Calu3 (cell line): ENCODE measurements at regions of chr3 and their contacts with region 1.

Region 1: GRCh38 chr3:156151824-156152428 is 31.5 kb downstream of the KCNAB1 start:
- DNase-seq: peak; percentile 84
- H3K4me3 Mint-ChIP-seq: no peak overlapping the region
- H3K27ac Mint-ChIP-seq: no peak overlapping the region
- H3K4me1 Mint-ChIP-seq: peaks cover 8% of the 10 kb centered on the region
- H3K27me3 Mint-ChIP-seq: peaks cover 55% of the 10 kb centered on the region
- CTCF ChIP-seq: peak; percentile 95

Region 2: GRCh38 chr3:156307704-156308103 is 155.8 kb after region 1 on chr3:
- CTCF ChIA-PET with region 1: no interaction called
- intact Hi-C with region 1: loop called (anchors 5 kb)
- DNase-seq: peak; percentile 78
- H3K4me3 Mint-ChIP-seq: no peak overlapping the region
- H3K27ac Mint-ChIP-seq: no peak overlapping the region
- H3K4me1 Mint-ChIP-seq: peaks cover 38% of the 10 kb centered on the region
- H3K27me3 Mint-ChIP-seq: peaks cover 15% of the 10 kb centered on the region
- CTCF ChIP-seq: no peak

Region 3: GRCh38 chr3:156449712-156450574 is 298.0 kb after region 1 on chr3:
- CTCF ChIA-PET with region 1: interaction called, 14 read pairs
- intact Hi-C with region 1: loop called (anchors 2 kb)
- DNase-seq: peak; percentile 39
- H3K4me3 Mint-ChIP-seq: no peak overlapping the region
- H3K27ac Mint-ChIP-seq: no peak overlapping the region
- H3K4me1 Mint-ChIP-seq: no peaks in the 10 kb centered on the region
- H3K27me3 Mint-ChIP-seq: no peaks in the 10 kb centered on the region
- CTCF ChIP-seq: peak; percentile 61

Region 4: DNA sequence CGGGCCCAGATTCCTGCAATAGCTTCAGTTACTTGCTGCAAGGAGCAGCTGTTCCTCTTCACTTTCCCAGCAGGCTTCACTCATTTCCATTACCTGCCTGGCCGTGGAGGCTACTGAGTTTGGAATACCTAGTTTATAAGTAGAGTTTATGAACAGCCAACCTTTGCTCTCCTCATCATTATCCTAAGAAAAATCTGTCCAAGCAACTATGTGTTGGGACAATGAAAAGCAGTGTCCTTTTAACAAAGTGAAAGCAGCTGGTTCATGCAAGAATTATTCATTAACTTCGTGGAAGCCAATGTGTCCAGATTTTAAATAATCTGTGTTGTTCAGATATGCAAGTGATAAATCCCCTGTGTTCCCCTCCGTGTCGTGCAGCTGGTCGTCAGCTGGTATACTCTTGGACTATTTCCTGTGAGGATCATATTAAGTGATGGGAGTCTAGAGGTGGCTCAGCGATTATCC is 442.3 kb after region 1 on chr3:
- CTCF ChIA-PET with region 1: no interaction called
- intact Hi-C with region 1: no loop called
- DNase-seq: peak; percentile 35
- H3K4me3 Mint-ChIP-seq: peak overlapping the region; percentile 63
- H3K27ac Mint-ChIP-seq: peak overlapping the region; percentile 7
- H3K4me1 Mint-ChIP-seq: peaks cover 20% of the 10 kb centered on the region
- H3K27me3 Mint-ChIP-seq: no peaks in the 10 kb centered on the region
- CTCF ChIP-seq: no peak

Region 5: DNA sequence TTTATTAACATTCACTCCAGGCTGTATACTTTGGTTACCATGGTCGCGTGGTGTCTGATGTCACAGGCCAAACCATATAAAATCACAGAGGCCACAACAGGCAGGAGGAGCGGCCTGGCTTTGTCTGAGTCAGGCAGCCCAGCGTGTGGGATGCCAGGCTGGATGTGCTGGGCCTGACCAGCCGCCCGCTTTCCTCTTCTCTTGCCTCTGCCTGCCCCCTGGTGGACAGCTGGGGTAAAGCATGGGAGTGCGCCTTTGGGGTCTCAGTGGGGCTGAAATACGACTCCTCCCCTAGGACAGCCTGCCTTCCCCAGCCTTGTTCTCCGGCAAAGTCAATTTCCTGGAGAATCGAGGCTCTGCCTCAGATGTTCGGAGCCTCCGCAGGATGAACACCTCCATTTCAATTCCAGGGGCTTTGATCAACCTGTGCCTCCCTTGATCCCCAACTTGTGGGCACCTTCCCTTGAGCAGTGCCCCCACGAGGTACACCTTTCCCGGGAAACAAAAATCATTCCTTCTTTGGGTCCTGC is 929.8 kb after region 1 on chr3:
- CTCF ChIA-PET with region 1: no interaction called
- intact Hi-C with region 1: loop called (anchors 2 kb)
- DNase-seq: peak; percentile 99
- H3K4me3 Mint-ChIP-seq: no peak overlapping the region
- H3K27ac Mint-ChIP-seq: peak overlapping the region; percentile 94
- H3K4me1 Mint-ChIP-seq: peaks cover 46% of the 10 kb centered on the region
- H3K27me3 Mint-ChIP-seq: no peaks in the 10 kb centered on the region
- CTCF ChIP-seq: peak; percentile 100